Activated T-helper 2 cell treated with anti-CD3 and anti-CD28 coated beads, Interferon-gamma antibody, Interleukin-2, Interleukin-4, amounts not matched to agents 10 μg/mL and 5 μg/mL and 100 μg/mL, durations not matched to agents 14 hours and 24 hours and 36 hours (primary cell): ENCODE measurements at regions of chr4 and their contacts with region 1.

Region 1: GRCh38 chr4:184100297-184100885 is 117.3 kb downstream of the ENPP6 start:
- DNase-seq: no peak
- H3K4me3 Mint-ChIP-seq: no peak overlapping the region
- H3K27ac Mint-ChIP-seq: no peak overlapping the region
- H3K4me1 Mint-ChIP-seq: peaks cover 4% of the 10 kb centered on the region
- H3K27me3 Mint-ChIP-seq: peaks cover 3% of the 10 kb centered on the region

Region 2: GRCh38 chr4:183840311-183840710 is 260.1 kb before region 1 on chr4:
- intact Hi-C with region 1: loop called (anchors 5 kb)
- DNase-seq: peak; percentile 34
- H3K4me3 Mint-ChIP-seq: no peak overlapping the region
- H3K27ac Mint-ChIP-seq: no peak overlapping the region
- H3K4me1 Mint-ChIP-seq: no peaks in the 10 kb centered on the region
- H3K27me3 Mint-ChIP-seq: peaks cover 12% of the 10 kb centered on the region

Region 3: GRCh38 chr4:184080674-184081073 is 19.7 kb before region 1 on chr4:
- intact Hi-C with region 1: no loop called
- DNase-seq: no peak
- H3K4me3 Mint-ChIP-seq: no peak overlapping the region
- H3K27ac Mint-ChIP-seq: no peak overlapping the region
- H3K4me1 Mint-ChIP-seq: no peaks in the 10 kb centered on the region
- H3K27me3 Mint-ChIP-seq: peaks cover 12% of the 10 kb centered on the region

Region 4: GRCh38 chr4:185112104-185112503 is 1011.7 kb after region 1 on chr4:
- intact Hi-C with region 1: no loop called
- DNase-seq: no peak
- H3K4me3 Mint-ChIP-seq: no peak overlapping the region
- H3K27ac Mint-ChIP-seq: no peak overlapping the region
- H3K4me1 Mint-ChIP-seq: peaks cover 8% of the 10 kb centered on the region
- H3K27me3 Mint-ChIP-seq: peaks cover 31% of the 10 kb centered on the region